ENCODE measurements at regions of chr11 and their contacts with region 1.

Region 1: GRCh38 chr11:130434521-130435223 is 6.3 kb upstream of the ADAMTS8 start:
- DNase-seq: peak; percentile 91
- H3K4me3 Mint-ChIP-seq: no peak overlapping the region
- H3K27ac Mint-ChIP-seq: no peak overlapping the region
- H3K4me1 Mint-ChIP-seq: peaks cover 17% of the 10 kb centered on the region
- H3K27me3 Mint-ChIP-seq: peaks cover 26% of the 10 kb centered on the region

Region 2: GRCh38 chr11:130213143-130213978 is 221.3 kb before region 1 on chr11:
- intact Hi-C with region 1: loop called (anchors 1 kb)
- DNase-seq: peak; percentile 93
- H3K4me3 Mint-ChIP-seq: no peak overlapping the region
- H3K27ac Mint-ChIP-seq: no peak overlapping the region
- H3K4me1 Mint-ChIP-seq: no peaks in the 10 kb centered on the region
- H3K27me3 Mint-ChIP-seq: peaks cover 2% of the 10 kb centered on the region

Region 3: DNA sequence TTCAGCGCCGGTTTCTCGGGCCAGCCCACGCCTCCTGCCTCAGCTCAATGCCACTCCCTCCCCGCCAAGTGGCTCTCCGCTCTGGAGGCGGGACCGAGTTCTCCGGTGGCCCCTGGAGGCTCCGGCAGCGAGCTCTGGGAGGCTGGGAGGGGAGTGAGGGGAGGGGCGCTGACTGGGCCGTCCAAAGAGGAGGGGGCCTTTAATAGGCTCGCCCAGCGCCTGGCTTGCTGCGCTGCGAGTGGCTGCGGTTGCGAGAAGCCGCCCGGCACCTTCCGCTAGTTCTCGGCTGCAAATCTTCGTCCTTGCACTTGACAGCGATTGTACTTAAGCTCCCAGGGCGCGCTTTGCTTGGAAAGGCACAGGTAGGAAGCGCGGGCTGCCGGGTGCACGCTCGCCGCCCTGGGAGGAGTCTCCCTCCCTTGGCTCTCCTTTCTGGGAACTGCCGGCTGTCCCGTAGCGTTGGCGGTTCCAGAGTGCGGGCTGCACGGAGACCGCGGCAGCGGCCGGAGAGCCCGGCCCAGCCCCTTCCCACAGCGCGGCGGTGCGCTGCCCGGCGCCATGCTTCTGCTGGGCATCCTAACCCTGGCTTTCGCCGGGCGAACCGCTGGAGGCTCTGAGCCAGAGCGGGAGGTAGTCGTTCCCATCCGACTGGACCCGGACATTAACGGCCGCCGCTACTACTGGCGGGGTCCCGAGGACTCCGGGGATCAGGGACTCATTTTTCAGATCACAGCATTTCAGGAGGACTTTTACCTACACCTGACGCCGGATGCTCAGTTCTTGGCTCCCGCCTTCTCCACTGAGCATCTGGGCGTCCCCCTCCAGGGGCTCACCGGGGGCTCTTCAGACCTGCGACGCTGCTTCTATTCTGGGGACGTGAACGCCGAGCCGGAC is 14.0 kb after region 1 on chr11 and contains the start of gene ADAMTS15:
- intact Hi-C with region 1: loop called (anchors 2 kb)
- DNase-seq: peak; percentile 85
- H3K4me3 Mint-ChIP-seq: peak within 1 kb of the TSS; percentile 67
- H3K27ac Mint-ChIP-seq: no peak within 1 kb of the TSS
- H3K4me1 Mint-ChIP-seq: peaks cover 6% of the 10 kb centered on the region
- H3K27me3 Mint-ChIP-seq: peaks cover 60% of the 10 kb centered on the region
- total RNA-seq, gene ADAMTS15: 0.02 TPM in 1 of 2 replicates, not detected in the other

Region 4: GRCh38 chr11:130536106-130537040 is 101.7 kb after region 1 on chr11:
- intact Hi-C with region 1: no loop called
- DNase-seq: no peak
- H3K4me3 Mint-ChIP-seq: no peak overlapping the region
- H3K27ac Mint-ChIP-seq: no peak overlapping the region
- H3K4me1 Mint-ChIP-seq: no peaks in the 10 kb centered on the region
- H3K27me3 Mint-ChIP-seq: peaks cover 20% of the 10 kb centered on the region

Region 5: DNA sequence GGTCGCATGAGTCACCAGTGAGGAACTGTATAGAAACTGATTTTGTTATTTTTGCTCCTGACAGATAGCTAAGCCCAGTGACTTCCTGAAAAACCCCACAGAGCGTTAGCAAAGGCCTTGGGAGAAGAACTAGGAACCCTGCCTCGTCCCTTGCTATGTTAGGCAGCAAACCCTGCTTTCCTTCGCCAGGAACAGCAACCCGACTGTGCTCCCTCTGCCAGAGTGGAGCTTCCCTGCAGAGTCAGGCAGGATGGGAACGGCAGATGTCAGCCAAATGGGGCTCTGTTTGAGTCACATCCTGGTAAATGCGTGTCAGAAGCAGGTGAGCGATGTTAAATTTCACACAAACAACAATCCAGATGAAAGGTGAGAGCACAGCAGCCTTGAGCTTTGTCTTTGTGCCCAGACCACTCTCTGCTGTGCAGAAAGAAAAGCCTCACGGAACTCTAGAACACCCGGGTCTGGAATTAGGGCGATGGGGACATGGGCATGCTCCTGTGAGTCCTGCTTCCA is 200.3 kb after region 1 on chr11:
- intact Hi-C with region 1: loop called (anchors 5 kb)
- DNase-seq: peak; percentile 76
- H3K4me3 Mint-ChIP-seq: peak overlapping the region; percentile 44
- H3K27ac Mint-ChIP-seq: peak overlapping the region; percentile 78
- H3K4me1 Mint-ChIP-seq: peaks cover 45% of the 10 kb centered on the region
- H3K27me3 Mint-ChIP-seq: no peaks in the 10 kb centered on the region

Region 6: DNA sequence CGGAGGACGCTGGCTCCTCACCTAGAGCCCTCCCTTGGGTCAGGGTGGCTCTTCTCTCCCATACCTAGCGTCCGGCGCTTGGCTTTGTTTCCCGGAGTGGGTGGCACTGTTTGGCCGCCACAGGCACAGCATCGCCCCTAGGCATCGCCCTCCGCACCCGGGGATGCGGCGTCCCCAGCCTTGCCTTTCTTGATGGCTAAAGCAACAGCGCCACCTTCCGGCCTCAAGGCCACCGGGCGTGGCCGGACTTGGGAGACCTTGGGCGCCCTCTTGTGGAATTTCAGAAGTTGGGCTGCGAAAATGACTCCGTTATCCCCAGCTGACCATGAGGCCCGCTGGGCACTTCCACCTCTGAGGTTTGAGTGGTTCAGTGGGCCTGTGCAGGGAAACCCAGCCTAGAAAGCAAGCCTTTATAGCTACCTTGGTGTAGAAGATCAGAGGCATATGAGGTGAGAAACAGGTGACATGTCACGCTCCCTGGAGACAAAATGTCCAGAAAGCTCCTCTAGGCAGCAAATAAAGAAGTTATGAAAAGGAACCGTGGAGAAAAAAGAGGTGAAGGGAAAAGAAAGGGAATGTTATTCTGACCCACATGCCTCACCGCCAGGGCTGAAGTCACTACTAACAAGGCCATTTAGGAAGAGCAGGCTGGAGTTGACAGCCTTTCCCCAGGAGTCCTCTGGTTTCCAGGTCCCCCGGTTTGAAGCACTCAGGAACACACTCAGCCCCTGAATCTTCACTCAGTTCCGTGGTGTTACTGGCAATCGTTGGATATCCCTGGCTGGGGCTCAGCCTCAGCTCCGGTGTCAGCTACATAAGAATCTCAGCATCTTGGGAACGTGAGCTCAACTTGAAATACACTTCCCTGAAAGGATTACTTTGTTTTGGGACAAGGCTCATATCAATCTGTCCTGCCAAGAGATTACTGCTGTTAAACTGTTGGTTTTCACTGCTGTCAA is 427.5 kb after region 1 on chr11:
- intact Hi-C with region 1: loop called (anchors 1 kb)
- DNase-seq: peak; percentile 96
- H3K4me3 Mint-ChIP-seq: no peak overlapping the region
- H3K27ac Mint-ChIP-seq: no peak overlapping the region
- H3K4me1 Mint-ChIP-seq: no peaks in the 10 kb centered on the region
- H3K27me3 Mint-ChIP-seq: peaks cover under 1% of the 10 kb centered on the region

Region 7: DNA sequence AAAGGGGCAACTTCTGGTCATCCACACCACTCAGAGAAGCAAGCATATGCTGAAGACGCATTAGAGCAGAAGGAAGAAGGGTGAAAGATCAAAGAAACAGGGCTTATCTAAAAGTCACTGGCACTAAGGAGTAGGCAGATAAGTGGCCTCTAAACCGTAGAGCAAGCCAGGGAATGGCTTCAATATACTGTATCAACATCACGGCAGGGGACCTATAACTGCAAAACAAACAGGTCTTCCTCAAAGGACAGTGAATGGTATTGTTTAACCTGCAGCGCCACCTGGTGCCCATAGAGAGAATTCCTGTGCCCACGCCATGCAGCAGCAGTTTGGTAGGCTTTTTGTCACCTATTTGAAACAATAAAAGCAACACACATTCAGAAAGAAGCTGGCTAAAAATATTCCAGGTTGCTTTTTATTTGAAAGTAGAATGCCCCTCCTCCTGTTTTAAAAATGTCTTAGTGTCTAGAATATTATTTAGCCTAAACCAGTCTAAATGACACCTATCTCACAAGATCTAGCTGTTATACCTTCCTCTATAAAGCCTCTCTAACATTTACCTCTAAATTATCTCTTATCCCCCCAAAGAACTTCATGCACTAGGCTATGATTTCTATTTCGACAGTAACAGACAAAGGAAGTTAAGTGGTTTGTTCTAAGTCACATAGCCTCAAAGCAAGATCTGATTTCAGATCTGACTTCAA is 459.8 kb after region 1 on chr11:
- intact Hi-C with region 1: loop called (anchors 1 kb)
- DNase-seq: peak; percentile 88
- H3K4me3 Mint-ChIP-seq: no peak overlapping the region
- H3K27ac Mint-ChIP-seq: no peak overlapping the region
- H3K4me1 Mint-ChIP-seq: no peaks in the 10 kb centered on the region
- H3K27me3 Mint-ChIP-seq: no peaks in the 10 kb centered on the region

Measured in activated CD4-positive, alpha-beta T cell treated with anti-CD3 and anti-CD28 coated beads, Interleukin-2, amount 10 ng/mL, durations not matched to agents 24 days and 14 days (primary cell).